ENCODE measurements at regions of chr14 and their contacts with region 1.

Region 1: DNA sequence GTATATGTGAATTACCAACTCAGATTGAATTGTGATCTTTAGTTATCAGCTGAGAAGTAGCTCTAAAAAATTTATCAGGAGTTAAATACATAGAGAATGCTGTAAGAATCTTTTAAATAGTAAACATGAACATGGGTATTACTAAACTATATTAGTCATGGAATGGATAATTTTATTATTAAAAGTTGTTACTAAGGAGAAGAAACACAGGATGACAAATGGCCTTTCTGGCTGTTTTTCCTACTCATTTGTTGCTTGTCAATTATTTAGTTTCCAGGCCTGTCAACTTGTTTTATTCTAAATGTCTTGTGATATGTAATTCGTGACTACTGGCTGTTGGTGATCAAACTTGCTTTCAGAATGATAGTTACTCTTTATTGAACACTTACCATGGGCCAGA is 58.7 kb downstream of the KTN1 start:
- H3K4me3 Mint-ChIP-seq: no peak overlapping the region
- H3K27ac Mint-ChIP-seq: no peak overlapping the region
- H3K4me1 Mint-ChIP-seq: peaks cover 4% of the 10 kb centered on the region
- H3K27me3 Mint-ChIP-seq: no peaks in the 10 kb centered on the region

Region 2: GRCh38 chr14:55671641-55672040 is 33.0 kb after region 1 on chr14:
- intact Hi-C with region 1: loop called (anchors 5 kb)
- H3K4me3 Mint-ChIP-seq: no peak overlapping the region
- H3K27ac Mint-ChIP-seq: no peak overlapping the region
- H3K4me1 Mint-ChIP-seq: no peaks in the 10 kb centered on the region
- H3K27me3 Mint-ChIP-seq: no peaks in the 10 kb centered on the region

Measured in dendritic cell treated with granulocyte-macrophage colony-stimulating factor and Interleukin-4, amounts not matched to agents 40 ng/mL and 50 ng/mL, for 4 days (primary cell).